GM23248 (cell line): ENCODE measurements at regions of chr14 and their contacts with region 1.

Region 1: GRCh38 chr14:30214461-30215090 is 286.9 kb upstream of the PRKD1 start:
- DNase-seq: peak; percentile 85
- H3K4me3 ChIP-seq: peak overlapping the region; percentile 41
- H3K27ac ChIP-seq: no peak overlapping the region
- H3K4me1 ChIP-seq: peaks cover 40% of the 10 kb centered on the region
- H3K27me3 ChIP-seq: no peaks in the 10 kb centered on the region

Region 2: DNA sequence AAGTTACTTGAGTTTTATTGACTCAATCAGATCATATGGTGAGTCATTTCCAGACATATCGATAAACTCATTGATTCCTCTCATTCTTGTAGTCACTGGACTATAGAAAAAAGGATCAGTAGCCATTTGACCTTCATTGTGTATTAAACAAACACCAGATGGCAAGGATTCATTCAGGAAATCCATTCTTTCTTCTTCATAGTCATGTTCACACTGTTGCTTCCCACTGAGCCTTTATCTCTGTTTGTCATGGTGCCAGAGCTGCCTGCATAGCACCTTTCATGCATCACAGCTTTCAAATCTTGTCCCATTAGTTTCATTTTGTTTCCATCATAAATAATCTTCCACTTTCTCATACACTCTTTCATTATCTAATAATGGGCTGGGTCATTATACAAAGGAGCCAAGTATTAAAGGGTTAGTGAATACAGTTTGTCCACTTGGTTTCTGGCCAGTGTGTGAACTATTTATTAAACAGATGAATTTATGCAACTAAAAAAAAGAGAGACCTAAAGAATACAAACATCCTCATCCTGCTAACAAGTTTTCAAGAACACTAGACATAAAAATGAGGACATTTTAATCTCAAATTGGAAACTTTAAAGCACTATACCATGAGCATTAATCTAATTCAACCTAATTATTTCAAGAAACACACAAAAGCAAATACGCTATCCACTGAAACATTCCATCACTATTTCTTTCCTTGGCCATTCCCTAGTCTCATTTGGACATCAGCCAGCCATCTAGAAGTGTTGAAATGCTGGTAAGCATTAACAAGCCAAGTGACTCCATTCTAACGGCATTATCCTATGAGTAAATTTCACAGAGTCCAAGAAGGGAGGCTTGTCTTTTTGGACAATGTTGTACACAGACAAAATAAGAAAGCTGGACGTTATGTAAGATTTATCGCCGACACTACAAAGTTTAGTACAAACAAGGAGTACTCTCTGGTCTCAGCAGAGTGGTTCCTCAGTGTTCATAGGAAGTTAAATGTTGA is 971.5 kb before region 1 on chr14:
- in situ Hi-C with region 1: loop called (anchors 25 kb)
- DNase-seq: peak; percentile 87
- H3K4me3 ChIP-seq: peak overlapping the region; percentile 53
- H3K27ac ChIP-seq: peak overlapping the region; percentile 46
- H3K4me1 ChIP-seq: peaks cover 54% of the 10 kb centered on the region
- H3K27me3 ChIP-seq: no peaks in the 10 kb centered on the region

Region 3: GRCh38 chr14:29548948-29549370 is 665.6 kb before region 1 on chr14:
- in situ Hi-C with region 1: loop called (anchors 10 kb)
- DNase-seq: peak; percentile 81
- H3K4me3 ChIP-seq: no peak overlapping the region
- H3K27ac ChIP-seq: no peak overlapping the region
- H3K4me1 ChIP-seq: no peaks in the 10 kb centered on the region
- H3K27me3 ChIP-seq: no peaks in the 10 kb centered on the region

Region 4: GRCh38 chr14:30410986-30411385 is 196.4 kb after region 1 on chr14:
- in situ Hi-C with region 1: no loop called
- DNase-seq: no peak
- H3K4me3 ChIP-seq: no peak overlapping the region
- H3K27ac ChIP-seq: no peak overlapping the region
- H3K4me1 ChIP-seq: no peaks in the 10 kb centered on the region
- H3K27me3 ChIP-seq: peaks cover 8% of the 10 kb centered on the region; the same call in 1 of the 2 replicates